H1 (cell line): ENCODE measurements at regions of chr6 and their contacts with region 1.

Region 1: DNA sequence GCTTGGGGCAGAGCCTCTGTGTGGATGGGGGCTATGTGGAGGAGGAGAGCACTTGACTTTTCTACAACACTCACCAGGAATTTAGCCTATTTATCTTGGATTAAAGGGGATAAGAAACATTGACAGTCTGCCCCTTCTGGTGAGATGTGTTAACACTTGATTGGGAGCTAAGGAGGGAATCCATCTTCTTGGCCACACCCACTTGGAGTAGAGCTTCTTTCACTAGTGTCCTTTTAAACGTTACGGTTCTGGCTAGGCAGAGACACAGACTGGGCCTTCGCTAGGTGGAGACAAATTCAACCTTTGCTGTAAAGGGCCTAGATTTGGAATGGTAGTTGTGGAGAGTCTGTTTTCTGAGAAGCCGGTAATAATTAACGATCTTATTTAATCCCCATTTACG is 15.5 kb upstream of the TPBG start:
- DNase-seq: no peak
- H3K4me3 ChIP-seq: no peak overlapping the region
- H3K27ac ChIP-seq: no peak overlapping the region
- H3K4me1 ChIP-seq: no peaks in the 10 kb centered on the region
- H3K27me3 ChIP-seq: no peaks in the 10 kb centered on the region
- CTCF ChIP-seq: peak in 2 of 3 experiments; percentile 26 to 63; a peak in 2 of 4 replicates
- EP300 ChIP-seq: no peak
- POLR2A ChIP-seq: no peak
- RAD21 ChIP-seq: peak in 1 of 2 experiments; percentile 23; a peak in 3 of 4 replicates

Region 2: DNA sequence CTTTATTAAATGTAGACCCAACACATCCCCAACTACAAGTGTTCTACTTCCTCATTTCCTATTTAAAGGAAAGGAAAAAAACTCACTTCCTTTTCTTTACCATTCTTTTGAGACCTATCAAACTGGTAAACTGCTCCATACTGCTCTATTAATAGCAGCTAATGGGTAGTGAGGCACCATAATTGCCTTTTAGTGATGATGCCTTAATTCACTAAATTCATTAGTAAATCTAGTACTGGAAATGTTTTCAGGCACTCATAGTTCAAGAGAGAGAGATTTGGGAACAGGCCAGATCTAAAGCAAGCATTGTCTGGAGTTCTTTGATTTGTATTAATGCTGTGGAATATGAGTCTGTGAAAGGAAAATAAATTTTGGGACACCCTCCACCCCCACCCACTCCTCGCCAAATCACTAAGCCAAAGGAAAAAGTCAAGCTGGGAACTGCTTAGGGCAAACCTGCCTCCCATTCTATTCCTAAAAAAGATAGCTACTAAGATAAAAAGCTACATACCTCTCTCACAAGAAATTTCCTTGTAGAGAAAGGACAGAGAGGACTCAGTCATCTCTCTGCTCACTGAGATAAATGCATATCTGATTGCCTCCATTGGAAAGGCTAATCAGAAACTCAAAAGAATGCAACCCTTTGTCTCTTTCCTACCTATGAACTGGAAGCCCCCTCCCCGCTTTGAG is 87.0 kb before region 1 on chr6:
- CTCF ChIA-PET with region 1: no interaction called
- POLR2A ChIA-PET with region 1: no interaction called
- DNase-seq: no peak
- H3K4me3 ChIP-seq: no peak overlapping the region
- H3K27ac ChIP-seq: no peak overlapping the region
- H3K4me1 ChIP-seq: peaks cover 0 to 7% (median 1%) of the 10 kb centered on the region in 4 experiments; a peak in 2 of 7 replicates
- H3K27me3 ChIP-seq: no peaks in the 10 kb centered on the region
- CTCF ChIP-seq: no peak
- EP300 ChIP-seq: no peak
- POLR2A ChIP-seq: no peak
- RAD21 ChIP-seq: no peak

Region 3: GRCh38 chr6:82331031-82331773 is 16.9 kb before region 1 on chr6:
- CTCF ChIA-PET with region 1: interaction called, 13 read pairs
- POLR2A ChIA-PET with region 1: no interaction called
- DNase-seq: no peak
- H3K4me3 ChIP-seq: no peak overlapping the region
- H3K27ac ChIP-seq: no peak overlapping the region
- H3K4me1 ChIP-seq: no peaks in the 10 kb centered on the region
- H3K27me3 ChIP-seq: no peaks in the 10 kb centered on the region
- CTCF ChIP-seq: peak in 1 of 3 experiments; percentile 44; a peak in 1 of 4 replicates
- EP300 ChIP-seq: no peak
- POLR2A ChIP-seq: no peak
- RAD21 ChIP-seq: peak; percentile 56 to 67

Region 4: GRCh38 chr6:82363351-82364086 is 15.4 kb after region 1 on chr6 and contains the start of gene TPBG:
- CTCF ChIA-PET with region 1: interaction called, 27 read pairs
- POLR2A ChIA-PET with region 1: no interaction called
- DNase-seq: peak; percentile 82 to 90
- H3K4me3 ChIP-seq: peak within 1 kb of the TSS; percentile 70 to 97 (median 80)
- H3K27ac ChIP-seq: peak within 1 kb of the TSS; percentile 57; the same call in 1 of the 2 replicates
- H3K4me1 ChIP-seq: peaks cover 5 to 16% (median 7%) of the 10 kb centered on the region in 4 experiments
- H3K27me3 ChIP-seq: no peaks in the 10 kb centered on the region; a peak in 1 of 7 replicates
- CTCF ChIP-seq: peak; percentile 51 to 71 (median 65); a peak in 3 of 4 replicates
- EP300 ChIP-seq: peak in 1 of 2 experiments; percentile 95; a peak in 2 of 3 replicates
- POLR2A ChIP-seq: peak in 1 of 2 experiments; percentile 55; a peak in 1 of 3 replicates
- RAD21 ChIP-seq: peak; percentile 58 to 61
- total RNA-seq, gene TPBG: 28.4 and 29.5 TPM in 2 replicates